MCF 10A (cell line): ENCODE measurements at regions of chr5 and their contacts with region 1.

Region 1: DNA sequence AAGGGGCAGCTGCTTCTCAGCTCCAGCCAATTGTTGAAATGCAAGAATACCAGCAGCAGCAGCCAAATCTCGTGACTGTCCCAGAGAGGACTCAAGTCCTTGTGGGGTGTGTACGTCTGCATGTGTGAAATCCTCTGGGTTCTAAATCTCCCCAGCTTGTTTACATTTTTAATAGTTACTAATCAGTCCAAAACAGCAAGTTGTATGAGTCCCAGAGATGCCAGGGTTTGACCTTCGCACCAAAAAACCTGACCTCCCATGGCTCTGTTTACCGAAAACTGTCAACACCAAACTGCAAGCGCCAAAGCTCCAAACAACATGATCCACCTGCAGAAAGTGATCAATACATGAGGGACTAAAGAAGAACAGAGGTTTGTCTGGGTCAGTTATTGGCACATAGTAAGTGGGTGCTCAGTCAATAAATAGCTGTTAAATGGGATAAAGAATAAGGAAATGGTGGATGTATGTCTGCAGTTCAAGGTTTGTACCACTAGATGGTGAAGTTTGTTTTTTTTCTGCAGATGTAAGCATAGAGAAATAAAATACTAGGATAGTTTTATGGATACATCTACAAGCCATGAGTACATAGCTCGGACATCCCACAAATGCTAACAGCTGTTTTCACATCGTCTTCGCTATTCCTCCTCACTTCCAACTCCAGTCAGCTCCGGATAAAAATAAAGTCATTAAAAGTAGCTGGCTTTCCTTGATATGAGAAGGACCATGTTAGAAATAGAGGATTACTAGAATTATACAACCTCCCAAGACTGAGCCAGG is 85.3 kb upstream of the ADRB2 start:
- DNase-seq: peak; percentile 77
- H3K4me3 Mint-ChIP-seq: no peak overlapping the region
- H3K27ac Mint-ChIP-seq: no peak overlapping the region
- H3K4me1 Mint-ChIP-seq: peaks cover 5% of the 10 kb centered on the region
- H3K27me3 Mint-ChIP-seq: no peaks in the 10 kb centered on the region
- CTCF ChIP-seq: peak; percentile 88

Region 2: DNA sequence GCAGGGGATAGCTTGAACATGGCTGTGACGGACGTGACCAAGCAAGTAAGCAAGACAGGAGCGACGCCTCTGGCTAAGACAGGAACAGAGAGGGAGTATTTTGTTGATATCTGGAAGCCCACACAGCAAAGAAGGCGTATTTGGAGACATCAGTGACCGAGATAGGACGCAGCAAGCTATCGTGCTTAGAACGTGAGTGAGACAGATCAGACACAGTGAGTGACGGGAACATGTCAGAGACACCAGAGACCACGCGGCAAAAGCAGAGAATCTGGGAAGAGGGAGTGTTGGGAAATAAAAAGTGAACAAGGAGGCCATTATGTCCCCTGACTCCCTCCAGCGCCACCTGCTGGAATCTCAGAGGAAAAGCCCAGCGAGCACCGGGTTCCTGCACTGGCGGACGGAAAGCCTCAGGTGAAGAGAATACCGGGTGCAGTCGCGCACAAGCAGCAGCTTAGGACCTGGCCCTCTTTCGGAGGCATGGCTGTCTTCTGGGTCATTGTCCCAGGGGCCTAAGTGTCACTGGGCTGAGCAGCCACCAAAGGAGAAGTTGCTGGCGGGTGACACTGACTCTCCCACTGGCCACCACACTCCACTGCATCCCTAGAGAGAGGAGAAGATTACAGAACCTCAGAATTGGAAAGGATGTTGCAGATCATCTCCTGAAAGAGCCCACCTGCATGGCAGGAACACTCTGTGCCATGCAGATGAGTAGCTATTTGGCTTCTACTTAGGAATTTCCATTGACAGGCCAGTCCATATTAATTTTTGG is 258.3 kb before region 1 on chr5:
- CTCF ChIA-PET with region 1: no interaction called
- POLR2A ChIA-PET with region 1: no interaction called
- intact Hi-C with region 1: no loop called
- DNase-seq: peak; percentile 62
- H3K4me3 Mint-ChIP-seq: no peak overlapping the region
- H3K27ac Mint-ChIP-seq: no peak overlapping the region
- H3K4me1 Mint-ChIP-seq: peaks cover 10% of the 10 kb centered on the region
- H3K27me3 Mint-ChIP-seq: peaks cover 37% of the 10 kb centered on the region
- CTCF ChIP-seq: peak; percentile 54

Region 3: DNA sequence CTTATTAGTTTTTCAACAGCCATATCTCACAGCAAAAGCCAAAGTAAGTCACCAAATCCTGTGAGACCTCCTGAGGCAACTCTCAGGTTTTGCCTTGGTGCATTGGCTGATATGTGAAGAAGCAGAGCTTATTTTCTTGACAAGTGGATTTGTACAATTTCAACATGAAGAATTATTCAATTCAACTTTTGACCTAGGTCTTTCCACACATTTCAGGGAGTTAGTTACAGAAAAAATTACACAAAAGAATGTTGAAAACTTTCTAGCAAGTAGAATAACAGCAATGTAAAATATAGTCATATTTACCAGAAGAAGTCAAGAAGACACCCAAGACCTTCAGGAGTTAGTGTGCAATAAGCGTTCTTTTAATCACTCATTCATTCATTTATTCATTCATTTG is 22.8 kb after region 1 on chr5:
- CTCF ChIA-PET with region 1: interaction called, 14 read pairs
- POLR2A ChIA-PET with region 1: interaction called, 3 read pairs
- intact Hi-C with region 1: no loop called
- DNase-seq: no peak
- H3K4me3 Mint-ChIP-seq: no peak overlapping the region
- H3K27ac Mint-ChIP-seq: no peak overlapping the region
- H3K4me1 Mint-ChIP-seq: no peaks in the 10 kb centered on the region
- H3K27me3 Mint-ChIP-seq: no peaks in the 10 kb centered on the region
- CTCF ChIP-seq: no peak

Region 4: GRCh38 chr5:148810823-148811222 is 69.7 kb after region 1 on chr5:
- CTCF ChIA-PET with region 1: interaction called, 10 read pairs
- POLR2A ChIA-PET with region 1: interaction called, 5 read pairs
- intact Hi-C with region 1: no loop called
- DNase-seq: no peak
- H3K4me3 Mint-ChIP-seq: peak overlapping the region; percentile 74
- H3K27ac Mint-ChIP-seq: no peak overlapping the region
- H3K4me1 Mint-ChIP-seq: peaks cover 33% of the 10 kb centered on the region
- H3K27me3 Mint-ChIP-seq: no peaks in the 10 kb centered on the region
- CTCF ChIP-seq: no peak

Region 5: DNA sequence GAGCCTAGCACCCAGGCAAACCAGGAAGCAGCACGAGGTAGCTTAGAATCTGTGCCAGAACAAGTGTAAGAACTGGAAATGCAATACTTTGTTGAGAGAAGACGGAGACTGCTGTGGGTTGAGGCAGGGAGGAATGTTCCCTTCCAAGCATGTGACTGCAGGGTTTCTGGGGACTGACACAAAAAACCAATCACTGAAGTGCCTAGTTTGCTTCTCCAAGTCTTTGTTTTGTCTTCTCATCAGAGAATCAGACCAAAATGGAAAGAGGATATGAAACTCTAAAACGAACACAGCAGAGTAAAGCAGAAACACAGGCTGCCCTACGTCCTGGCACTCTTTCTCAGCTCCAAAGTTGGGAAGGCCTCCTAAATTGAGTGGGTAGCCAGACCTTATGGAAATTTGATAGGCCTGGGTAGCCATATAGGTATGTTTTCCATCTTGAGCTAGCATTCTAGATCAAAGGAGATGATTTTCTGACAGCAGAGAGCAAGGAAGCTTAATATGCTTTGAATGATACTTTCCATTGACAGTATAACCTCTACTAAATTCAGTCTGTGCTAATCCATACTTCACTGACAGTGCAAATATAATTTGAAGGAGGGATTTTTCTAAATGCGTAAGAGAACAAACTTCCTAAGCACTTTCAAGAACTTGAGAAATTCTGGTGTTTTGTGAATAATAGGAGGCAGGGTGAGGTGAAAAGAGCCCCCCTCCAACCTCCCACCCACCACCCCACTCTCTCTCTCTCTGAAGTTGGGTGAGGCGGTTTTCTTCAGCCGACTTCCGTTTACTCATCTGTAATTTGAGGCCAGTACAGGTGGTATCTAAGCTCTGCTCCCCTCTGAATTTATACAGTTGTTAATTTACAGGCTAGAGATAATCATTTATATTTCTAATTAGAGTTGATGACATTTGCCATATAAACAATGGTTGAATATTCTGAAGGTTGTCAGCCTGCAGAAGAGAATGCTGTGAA is 90.7 kb after region 1 on chr5:
- CTCF ChIA-PET with region 1: interaction called, 142 read pairs
- POLR2A ChIA-PET with region 1: interaction called, 69 read pairs
- intact Hi-C with region 1: loop called (anchors 1 kb)
- DNase-seq: no peak
- H3K4me3 Mint-ChIP-seq: peak overlapping the region; percentile 90
- H3K27ac Mint-ChIP-seq: peak overlapping the region; percentile 69
- H3K4me1 Mint-ChIP-seq: peaks cover 87% of the 10 kb centered on the region
- H3K27me3 Mint-ChIP-seq: no peaks in the 10 kb centered on the region
- CTCF ChIP-seq: no peak

Region 6: GRCh38 chr5:148912714-148913398 is 171.7 kb after region 1 on chr5:
- CTCF ChIA-PET with region 1: interaction called, 43 read pairs
- POLR2A ChIA-PET with region 1: interaction called, 4 read pairs
- intact Hi-C with region 1: loop called (anchors 1 kb)
- DNase-seq: peak; percentile 98
- H3K4me3 Mint-ChIP-seq: peak overlapping the region; percentile 1
- H3K27ac Mint-ChIP-seq: peak overlapping the region; percentile 76
- H3K4me1 Mint-ChIP-seq: peaks cover 68% of the 10 kb centered on the region
- H3K27me3 Mint-ChIP-seq: no peaks in the 10 kb centered on the region
- CTCF ChIP-seq: peak; percentile 75

Region 7: DNA sequence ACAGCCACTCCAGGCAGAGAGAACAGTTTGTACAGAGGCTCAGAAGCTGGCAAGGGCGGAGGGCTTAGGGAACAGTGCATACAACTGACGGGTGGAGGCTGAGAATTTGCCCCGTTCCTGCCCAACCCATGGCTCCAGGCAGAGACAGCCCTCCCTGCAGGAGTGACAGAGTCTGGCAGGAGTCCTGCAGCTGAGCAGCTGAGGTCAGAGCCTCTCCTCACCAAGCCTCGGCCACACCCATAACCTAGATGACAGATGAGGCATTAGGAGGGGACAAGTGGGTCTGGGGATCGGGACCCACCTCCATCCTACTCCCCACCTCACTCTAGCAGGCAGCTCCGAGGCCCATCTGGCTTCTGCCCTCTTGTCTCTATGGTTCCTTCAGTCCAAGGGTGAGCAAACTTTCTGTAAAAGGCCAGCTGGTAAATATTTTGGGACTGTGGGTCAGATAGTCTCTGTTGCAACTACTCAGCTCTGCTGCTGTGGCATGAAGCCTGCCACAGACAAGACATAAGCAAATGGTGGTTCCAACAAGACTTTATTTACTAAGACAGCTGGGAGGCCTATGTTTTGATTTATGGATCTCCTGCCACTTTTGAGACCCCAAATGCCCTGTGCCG is 238.1 kb after region 1 on chr5:
- CTCF ChIA-PET with region 1: interaction called, 903 read pairs
- POLR2A ChIA-PET with region 1: no interaction called
- intact Hi-C with region 1: no loop called
- DNase-seq: peak; percentile 95
- H3K4me3 Mint-ChIP-seq: peak overlapping the region; percentile 59
- H3K27ac Mint-ChIP-seq: peak overlapping the region; percentile 97
- H3K4me1 Mint-ChIP-seq: peaks cover 70% of the 10 kb centered on the region
- H3K27me3 Mint-ChIP-seq: no peaks in the 10 kb centered on the region
- CTCF ChIP-seq: no peak

Region 8: DNA sequence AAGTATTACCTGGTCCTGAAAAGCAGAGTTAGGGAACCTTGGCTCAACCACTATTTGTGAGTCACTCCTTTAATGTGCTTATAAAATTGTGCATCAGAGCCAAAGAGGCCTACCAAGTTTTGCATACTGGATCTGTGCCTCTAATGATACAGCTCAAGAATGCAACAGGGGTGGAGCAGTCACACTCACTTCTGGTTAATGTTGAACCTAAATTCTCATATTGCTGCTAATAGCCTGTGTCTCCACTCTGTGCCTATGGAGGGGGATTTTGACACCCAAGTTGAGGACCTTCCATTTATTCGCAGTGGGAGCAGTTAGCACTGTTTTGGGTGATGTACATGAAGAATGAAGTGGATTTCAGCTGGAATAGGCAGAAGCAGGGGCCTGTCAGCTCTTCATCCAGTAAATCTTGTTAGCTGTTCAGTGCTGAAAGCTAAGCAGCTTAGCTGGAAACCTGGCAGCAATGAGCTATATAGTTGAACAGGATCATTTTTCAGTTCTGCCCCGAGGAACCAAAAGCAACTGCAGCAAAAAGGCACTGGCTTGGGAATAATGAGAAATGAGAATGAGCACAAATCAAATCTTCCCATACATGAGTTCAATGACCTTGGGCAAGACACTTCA is 312.0 kb after region 1 on chr5:
- CTCF ChIA-PET with region 1: interaction called, 11 read pairs
- POLR2A ChIA-PET with region 1: interaction called, 3 read pairs
- intact Hi-C with region 1: no loop called
- DNase-seq: peak; percentile 47
- H3K4me3 Mint-ChIP-seq: no peak overlapping the region
- H3K27ac Mint-ChIP-seq: no peak overlapping the region
- H3K4me1 Mint-ChIP-seq: peaks cover 23% of the 10 kb centered on the region
- H3K27me3 Mint-ChIP-seq: no peaks in the 10 kb centered on the region
- CTCF ChIP-seq: no peak